WTC11 (cell line): ENCODE measurements at regions of chr2 and their contacts with region 1.

Region 1: GRCh38 chr2:11583840-11584524 is 50.1 kb downstream of the GREB1 start:
- DNase-seq: peak; percentile 78
- ATAC-seq: peak; percentile 49
- H3K4me3 Mint-ChIP-seq: no peak overlapping the region
- H3K27ac Mint-ChIP-seq: peak overlapping the region; percentile 89
- H3K4me1 Mint-ChIP-seq: peaks cover 22% of the 10 kb centered on the region
- H3K27me3 Mint-ChIP-seq: no peaks in the 10 kb centered on the region
- CTCF ChIP-seq: peak; percentile 80

Region 2: GRCh38 chr2:11417946-11418585 is 165.9 kb before region 1 on chr2:
- CTCF ChIA-PET with region 1: interaction called, 20 read pairs
- POLR2A ChIA-PET with region 1: no interaction called
- DNase-seq: peak; percentile 26
- ATAC-seq: peak; percentile 24; the same call in 1 of the 2 replicates
- H3K4me3 Mint-ChIP-seq: no peak overlapping the region
- H3K27ac Mint-ChIP-seq: no peak overlapping the region; the same call in 1 of the 2 replicates
- H3K4me1 Mint-ChIP-seq: no peaks in the 10 kb centered on the region
- H3K27me3 Mint-ChIP-seq: peaks cover 3% of the 10 kb centered on the region
- CTCF ChIP-seq: peak; percentile 43; the same call in 1 of the 2 replicates

Region 3: GRCh38 chr2:11465497-11466406 is 118.2 kb before region 1 on chr2 and contains the start of gene E2F6:
- CTCF ChIA-PET with region 1: interaction called, 15 read pairs
- POLR2A ChIA-PET with region 1: no interaction called
- DNase-seq: peak; percentile 93
- ATAC-seq: peak; percentile 90
- H3K4me3 Mint-ChIP-seq: peak within 1 kb of the TSS; percentile 66
- H3K27ac Mint-ChIP-seq: no peak within 1 kb of the TSS
- H3K4me1 Mint-ChIP-seq: peaks cover 20% of the 10 kb centered on the region
- H3K27me3 Mint-ChIP-seq: peaks cover 23% of the 10 kb centered on the region
- CTCF ChIP-seq: no peak
- total RNA-seq, gene E2F6: 14.2 to 16.0 TPM (median 14.4 TPM) in 3 replicates

Region 4: DNA sequence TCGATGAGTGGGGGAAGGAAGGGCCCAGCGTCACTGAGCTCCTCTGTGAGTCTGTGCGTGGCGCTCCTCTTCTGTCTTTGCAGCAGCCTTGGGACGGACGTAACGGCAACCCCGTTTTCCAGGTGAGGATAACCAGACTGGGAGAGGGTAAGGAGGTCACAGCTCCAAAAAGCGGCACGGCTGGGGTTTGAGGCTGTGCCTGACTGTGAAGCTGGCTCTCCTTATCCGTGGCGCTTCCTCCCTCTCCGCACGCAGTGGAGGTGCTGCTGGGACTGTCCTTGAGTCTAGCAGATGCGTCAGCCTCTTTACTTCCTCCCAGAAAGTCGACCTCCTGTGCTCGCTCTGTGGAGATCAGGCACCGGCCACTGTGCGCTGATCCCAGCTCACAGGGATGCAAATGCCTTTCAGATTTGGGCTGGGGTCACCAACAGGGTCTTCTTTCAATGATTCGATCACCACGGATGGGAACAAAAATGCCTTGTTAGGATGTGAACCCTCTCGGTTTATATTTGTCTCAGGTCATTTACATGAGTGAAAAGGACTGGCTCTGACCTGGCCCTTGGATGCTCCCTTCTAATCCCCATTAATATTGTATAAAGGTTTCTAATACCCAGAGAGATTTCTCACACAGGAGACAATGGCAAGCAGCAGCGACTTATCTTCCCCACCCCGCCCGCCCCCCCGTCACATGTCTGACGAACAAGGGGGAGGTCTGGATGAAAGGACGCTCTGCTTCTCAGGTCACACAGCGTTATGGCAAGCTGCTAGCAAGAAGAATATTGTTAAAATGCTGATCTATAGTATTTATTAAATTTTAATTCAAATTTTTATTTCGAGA is 87.9 kb before region 1 on chr2:
- CTCF ChIA-PET with region 1: interaction called, 21 read pairs
- POLR2A ChIA-PET with region 1: interaction called, 3 read pairs
- DNase-seq: peak; percentile 31
- ATAC-seq: peak; percentile 87
- H3K4me3 Mint-ChIP-seq: peak overlapping the region; percentile 6; the same call in 1 of the 2 replicates
- H3K27ac Mint-ChIP-seq: 0 out of 2 replicates have a peak overlapping the region, but pooled peaks have one; percentile 29
- H3K4me1 Mint-ChIP-seq: peaks cover 62% of the 10 kb centered on the region
- H3K27me3 Mint-ChIP-seq: no peaks in the 10 kb centered on the region
- CTCF ChIP-seq: no peak

Region 5: GRCh38 chr2:11539317-11540152 is 44.4 kb before region 1 on chr2:
- CTCF ChIA-PET with region 1: interaction called, 191 read pairs
- POLR2A ChIA-PET with region 1: no interaction called
- DNase-seq: no peak
- ATAC-seq: peak; percentile 23
- H3K4me3 Mint-ChIP-seq: peak overlapping the region; percentile 26
- H3K27ac Mint-ChIP-seq: peak overlapping the region; percentile 71
- H3K4me1 Mint-ChIP-seq: peaks cover 71% of the 10 kb centered on the region
- H3K27me3 Mint-ChIP-seq: no peaks in the 10 kb centered on the region
- CTCF ChIP-seq: no peak

Region 6: DNA sequence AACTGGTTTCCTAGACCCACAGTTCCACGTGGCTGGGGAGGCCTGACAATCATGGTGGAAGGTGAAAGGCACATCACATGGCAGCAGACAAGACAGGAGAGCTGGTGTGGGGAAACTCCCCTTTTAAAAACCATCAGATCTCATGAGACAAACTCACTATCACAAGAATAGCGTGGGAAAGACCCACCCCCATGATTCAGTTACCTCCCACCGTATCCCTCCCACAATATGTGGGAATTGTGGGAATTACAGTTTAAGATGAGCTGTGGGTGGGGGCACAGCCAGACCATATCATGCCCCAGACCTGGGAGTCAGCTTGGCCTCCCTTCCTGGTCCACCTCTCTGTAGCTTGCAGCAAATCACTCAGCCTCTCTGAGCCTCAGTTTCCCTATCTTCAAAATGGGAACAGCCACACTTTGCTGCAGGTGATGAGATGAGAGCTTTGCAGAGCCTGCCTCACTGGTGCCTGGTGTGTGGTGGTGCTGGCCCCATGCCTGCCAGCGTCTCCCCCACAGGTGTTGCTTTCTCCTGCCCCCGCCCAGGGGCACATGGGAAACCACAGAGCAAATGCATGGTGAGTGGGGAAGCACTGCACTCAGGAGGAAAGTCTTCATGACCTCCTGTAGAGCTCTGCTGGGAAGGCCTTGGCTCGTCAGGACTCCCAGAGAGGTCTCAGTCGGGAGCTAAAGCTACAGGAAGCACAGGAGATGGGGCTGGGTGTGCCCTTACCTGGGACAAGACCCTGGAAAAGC is 19.0 kb before region 1 on chr2:
- CTCF ChIA-PET with region 1: interaction called, 15 read pairs
- POLR2A ChIA-PET with region 1: no interaction called
- DNase-seq: no peak
- ATAC-seq: no peak
- H3K4me3 Mint-ChIP-seq: no peak overlapping the region
- H3K27ac Mint-ChIP-seq: no peak overlapping the region; the same call in 1 of the 2 replicates
- H3K4me1 Mint-ChIP-seq: peaks cover 9% of the 10 kb centered on the region
- H3K27me3 Mint-ChIP-seq: no peaks in the 10 kb centered on the region
- CTCF ChIP-seq: no peak

Region 7: DNA sequence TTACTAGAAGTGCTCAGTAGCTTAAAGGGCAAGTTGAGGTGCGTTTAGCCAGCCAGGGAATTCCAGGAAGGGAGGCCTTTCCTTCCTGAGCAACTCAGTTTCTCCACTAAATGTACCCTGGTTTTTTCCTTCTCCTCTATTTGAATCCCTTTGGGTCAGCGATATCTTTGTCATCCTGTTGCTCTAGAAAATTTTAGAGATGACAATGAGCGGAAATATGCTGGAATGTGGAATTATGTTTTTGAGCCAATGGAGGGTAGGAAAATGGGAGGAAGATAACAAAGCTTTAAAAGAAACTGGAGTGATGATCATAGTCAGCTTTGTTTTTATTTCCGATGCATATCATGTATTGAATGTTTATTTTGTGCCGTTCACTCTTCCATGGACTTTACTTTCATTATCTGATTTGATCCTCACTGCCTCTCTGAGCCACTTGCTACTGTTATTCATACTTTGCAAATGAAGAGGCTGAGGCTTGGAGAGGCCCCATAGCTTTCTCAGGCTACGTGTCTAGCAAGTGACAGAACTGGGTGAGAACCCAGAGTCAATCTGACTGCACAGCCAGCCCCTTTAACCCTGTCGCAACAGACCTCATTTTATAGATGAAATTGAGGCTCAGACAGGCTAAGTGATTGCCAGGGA is 18.7 kb after region 1 on chr2:
- CTCF ChIA-PET with region 1: interaction called, 12 read pairs
- POLR2A ChIA-PET with region 1: no interaction called
- DNase-seq: no peak
- ATAC-seq: no peak
- H3K4me3 Mint-ChIP-seq: no peak overlapping the region
- H3K27ac Mint-ChIP-seq: peak overlapping the region; percentile 66; the same call in 1 of the 2 replicates
- H3K4me1 Mint-ChIP-seq: peaks cover 7% of the 10 kb centered on the region
- H3K27me3 Mint-ChIP-seq: no peaks in the 10 kb centered on the region
- CTCF ChIP-seq: no peak